ENCODE measurements at regions of chr7 and their contacts with region 1.

Region 1: DNA sequence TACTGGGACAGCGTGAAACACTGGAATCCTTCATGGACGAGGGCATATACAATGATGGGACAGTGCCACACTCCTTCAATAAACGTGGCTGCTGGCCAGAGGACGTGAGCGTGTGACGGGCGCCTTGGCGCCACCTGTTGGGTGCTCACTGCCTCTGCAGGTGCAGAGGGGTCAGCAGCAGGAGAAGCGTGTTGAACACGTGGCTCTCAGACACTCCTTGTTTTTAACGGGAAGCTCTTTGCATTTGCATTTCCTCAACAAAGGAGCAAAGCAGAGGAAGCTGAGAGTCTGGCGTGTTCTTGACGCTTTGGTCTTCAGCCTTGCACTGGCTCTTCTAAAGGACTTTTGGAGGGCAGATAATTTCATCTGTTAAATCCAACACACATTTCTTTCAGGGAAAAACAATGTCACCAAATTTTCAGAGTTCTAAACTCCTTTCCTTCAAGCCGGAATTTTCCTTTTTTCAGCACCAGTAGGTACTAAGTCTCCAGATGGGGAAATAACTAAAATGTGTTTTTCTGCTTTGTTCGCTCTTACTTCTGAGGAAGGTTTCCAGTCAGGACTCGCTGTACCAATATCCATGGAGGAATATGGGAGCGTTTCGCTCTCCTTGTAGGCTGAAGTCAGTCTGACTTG is 2.9 kb upstream of the GET4 start:
- DNase-seq: peak; percentile 77 to 92 (median 83)
- ATAC-seq: peak; percentile 55
- H3K4me3 ChIP-seq: no peak overlapping the region
- H3K27ac ChIP-seq: peak overlapping the region; percentile 86
- H3K4me1 ChIP-seq: peaks cover 27 to 29% of the 10 kb centered on the region in 2 experiments
- H3K27me3 ChIP-seq: no peaks in the 10 kb centered on the region
- CTCF ChIP-seq: peak; percentile 92 to 97 (median 94)
- EP300 ChIP-seq: no peak
- POLR2A ChIP-seq: peak; percentile 7; the same call in 1 of the 2 replicates
- RAD21 ChIP-seq: peak; percentile 80 to 84

Region 2: GRCh38 chr7:726084-726853 is 147.2 kb before region 1 on chr7 and contains the start of gene DNAAF5:
- CTCF ChIA-PET with region 1: no interaction called
- POLR2A ChIA-PET with region 1: no interaction called
- in situ Hi-C with region 1: no loop called
- intact Hi-C with region 1: loop called (anchors 5 kb)
- DNase-seq: peak; percentile 85 to 96 (median 88)
- ATAC-seq: peak; percentile 94
- H3K4me3 ChIP-seq: peak within 1 kb of the TSS; percentile 86
- H3K27ac ChIP-seq: peak within 1 kb of the TSS; percentile 86
- H3K4me1 ChIP-seq: peaks cover 23 to 43% of the 10 kb centered on the region in 2 experiments; a peak in 4 of 5 replicates
- H3K27me3 ChIP-seq: no peaks in the 10 kb centered on the region
- CTCF ChIP-seq: no peak
- EP300 ChIP-seq: no peak
- POLR2A ChIP-seq: peak; percentile 79
- RAD21 ChIP-seq: no peak
- polyA plus RNA-seq, gene DNAAF5: 3.1 to 5.1 TPM

Region 3: DNA sequence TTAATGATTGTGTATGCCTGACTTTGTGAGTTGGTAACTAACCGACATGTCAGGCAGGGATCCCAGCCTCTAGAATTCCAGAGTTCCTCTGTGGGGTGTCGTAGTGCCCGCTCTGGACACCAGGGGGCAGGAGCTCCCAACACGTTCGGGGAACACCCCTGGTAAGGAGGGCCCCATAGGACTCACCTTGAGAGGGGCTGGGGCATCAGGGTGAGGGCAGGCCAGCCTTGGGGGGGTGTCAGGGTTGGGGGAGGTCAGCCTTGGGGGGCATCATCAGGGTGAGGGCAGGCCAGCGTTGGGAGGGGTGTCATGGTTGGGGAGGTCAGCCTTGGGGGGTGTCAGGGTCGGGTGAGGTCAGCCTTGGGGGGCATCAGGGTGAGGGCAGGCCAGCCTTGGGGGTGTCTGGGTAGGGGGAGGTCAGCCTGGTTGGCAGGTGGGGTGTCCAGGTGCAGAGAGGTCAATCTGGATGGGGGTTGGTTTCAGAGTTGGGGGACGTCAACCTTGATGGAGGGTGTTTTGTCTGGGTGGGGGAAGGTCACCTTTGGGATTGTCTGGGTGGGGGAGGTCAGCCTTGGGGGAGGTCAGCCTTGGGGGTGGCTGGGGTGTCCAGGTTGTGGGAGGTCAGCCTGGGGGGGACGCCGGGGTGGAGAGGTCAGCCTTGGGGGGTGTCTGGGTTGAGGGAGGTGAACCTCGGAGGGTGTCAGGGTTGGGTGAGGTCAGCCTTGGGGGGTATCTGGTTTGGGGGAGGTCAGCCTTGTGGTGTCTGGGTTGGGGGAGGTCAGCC is 86.8 kb before region 1 on chr7:
- CTCF ChIA-PET with region 1: interaction called, 13 read pairs
- POLR2A ChIA-PET with region 1: no interaction called
- in situ Hi-C with region 1: loop called (anchors 5 kb)
- intact Hi-C with region 1: loop called (anchors 1 kb)
- DNase-seq: peak; percentile 62 to 86 (median 82)
- ATAC-seq: peak; percentile 95
- H3K4me3 ChIP-seq: no peak overlapping the region
- H3K27ac ChIP-seq: no peak overlapping the region
- H3K4me1 ChIP-seq: peaks cover 0 to 6% of the 10 kb centered on the region in 2 experiments; a peak in 1 of 5 replicates
- H3K27me3 ChIP-seq: no peaks in the 10 kb centered on the region
- CTCF ChIP-seq: peak; percentile 78 to 82 (median 78)
- EP300 ChIP-seq: no peak
- POLR2A ChIP-seq: no peak
- RAD21 ChIP-seq: peak; percentile 35 to 73; a peak in 3 of 4 replicates

Region 4: DNA sequence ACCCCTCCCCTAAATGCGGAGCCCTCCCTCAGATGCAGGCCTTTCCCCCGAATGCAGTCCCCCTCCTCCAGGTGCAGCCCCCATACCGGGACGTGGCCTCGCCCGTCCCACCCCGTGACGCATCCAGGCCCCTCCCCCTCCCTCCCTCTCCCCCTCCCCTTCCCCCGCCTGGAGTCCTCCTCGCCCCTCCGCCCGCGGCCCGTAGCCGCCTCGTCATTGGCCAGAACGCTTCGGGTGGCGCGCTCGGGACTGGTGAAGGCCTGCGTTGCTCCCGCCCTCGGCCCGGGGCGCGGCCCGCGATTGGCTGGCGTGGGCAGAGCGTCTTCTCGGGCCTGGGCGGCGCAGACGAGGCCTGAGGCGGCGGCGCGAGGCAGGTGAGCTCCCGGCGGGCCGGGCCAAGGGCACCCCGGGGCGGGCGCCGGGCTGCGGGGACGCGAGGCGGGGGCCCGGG is 57.2 kb before region 1 on chr7:
- CTCF ChIA-PET with region 1: interaction called, 7 read pairs
- POLR2A ChIA-PET with region 1: interaction called, 3 read pairs
- in situ Hi-C with region 1: no loop called
- intact Hi-C with region 1: loop called (anchors 5 kb)
- DNase-seq: peak; percentile 98 to 99 (median 98)
- ATAC-seq: peak; percentile 99
- H3K4me3 ChIP-seq: peak overlapping the region; percentile 69
- H3K27ac ChIP-seq: no peak overlapping the region; the same call in 1 of the 3 replicates
- H3K4me1 ChIP-seq: peaks cover 21 to 30% of the 10 kb centered on the region in 2 experiments
- H3K27me3 ChIP-seq: no peaks in the 10 kb centered on the region
- CTCF ChIP-seq: no peak
- EP300 ChIP-seq: no peak
- POLR2A ChIP-seq: no peak
- RAD21 ChIP-seq: no peak

Region 5: DNA sequence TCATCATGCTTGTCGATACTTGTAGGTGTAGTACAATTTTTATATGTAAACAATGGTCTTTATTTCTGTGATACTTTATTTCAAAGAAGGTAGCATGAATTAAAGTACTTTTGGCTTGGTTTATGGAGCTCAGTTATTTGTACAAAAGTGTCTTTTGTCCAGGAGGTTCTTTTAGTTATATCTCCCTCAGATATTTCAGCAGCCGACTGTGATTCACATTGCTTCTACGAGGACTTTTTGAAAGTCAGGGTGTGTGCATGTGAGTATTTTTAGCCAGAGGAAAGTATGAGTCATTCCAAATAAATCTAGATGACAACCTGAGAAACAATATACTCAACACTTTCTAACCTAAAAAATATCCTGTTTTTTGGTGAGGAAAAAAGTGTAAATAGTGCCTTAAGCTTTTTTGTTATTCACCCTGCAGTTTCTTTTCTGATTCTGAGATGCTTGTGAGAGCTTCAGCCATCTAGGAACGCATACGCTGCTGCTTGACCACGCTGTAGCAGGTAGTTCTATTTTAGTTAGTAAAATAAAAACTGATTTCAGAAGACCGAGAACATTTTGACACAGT is 41.8 kb before region 1 on chr7:
- CTCF ChIA-PET with region 1: no interaction called
- POLR2A ChIA-PET with region 1: interaction called, 3 read pairs
- in situ Hi-C with region 1: no loop called
- intact Hi-C with region 1: loop called (anchors 5 kb)
- DNase-seq: peak; percentile 53 to 73 (median 62)
- ATAC-seq: peak; percentile 78
- H3K4me3 ChIP-seq: no peak overlapping the region
- H3K27ac ChIP-seq: peak overlapping the region; percentile 72; the same call in 2 of the 3 replicates
- H3K4me1 ChIP-seq: peaks cover 22 to 38% of the 10 kb centered on the region in 2 experiments
- H3K27me3 ChIP-seq: no peaks in the 10 kb centered on the region
- CTCF ChIP-seq: no peak
- EP300 ChIP-seq: peak; percentile 68
- POLR2A ChIP-seq: no peak
- RAD21 ChIP-seq: no peak